ENCODE measurements at regions of chr16 and their contacts with region 1.

Region 1: GRCh38 chr16:2160915-2161551 is 5.5 kb downstream of the TRAF7 start:
- DNase-seq: no peak
- H3K4me3 ChIP-seq: no peak overlapping the region
- CTCF ChIP-seq: no peak

Region 2: DNA sequence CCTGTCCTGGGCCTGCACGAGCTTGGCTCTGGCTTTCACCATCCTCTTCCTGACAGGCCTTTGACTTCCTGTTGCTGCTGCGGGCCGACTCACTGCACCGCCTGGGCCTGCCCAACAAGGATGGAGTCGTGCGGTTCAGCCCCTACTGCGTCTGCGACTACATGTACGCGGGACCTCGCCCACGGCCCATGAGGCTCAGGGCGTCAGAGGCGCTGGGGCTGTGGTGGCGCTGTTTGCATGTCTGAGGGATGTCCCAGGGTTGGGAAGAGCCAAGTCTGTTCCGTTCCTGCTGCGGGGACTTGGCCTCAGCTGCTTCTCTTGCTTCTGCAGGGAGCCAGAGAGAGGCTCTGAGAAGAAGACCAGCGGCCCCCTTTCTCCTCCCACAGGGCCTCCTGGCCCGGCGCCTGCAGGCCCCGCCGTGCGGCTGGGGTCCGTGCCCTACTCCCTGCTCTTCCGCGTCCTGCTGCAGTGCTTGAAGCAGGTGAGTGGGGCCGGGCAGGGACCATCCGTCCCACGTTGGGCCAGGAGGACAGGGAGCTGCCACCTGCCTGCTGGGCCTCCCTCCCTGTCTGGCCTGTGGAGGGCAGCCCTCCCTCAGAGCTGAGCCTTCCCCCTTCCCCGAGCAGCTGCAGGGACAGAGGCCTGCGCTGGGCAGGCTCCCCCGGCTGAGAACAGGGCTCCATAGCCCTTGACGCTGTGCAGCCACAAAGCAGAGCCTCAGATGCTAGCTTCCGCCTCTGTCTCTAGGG is 89.4 kb before region 1 on chr16:
- in situ Hi-C with region 1: loop called (anchors 10 kb)
- DNase-seq: no peak
- H3K4me3 ChIP-seq: no peak overlapping the region
- CTCF ChIP-seq: no peak

Region 3: GRCh38 chr16:2236337-2237101 is 75.5 kb after region 1 on chr16 and contains the start of gene DNASE1L2:
- in situ Hi-C with region 1: no loop called
- DNase-seq: no peak
- H3K4me3 ChIP-seq: peak within 1 kb of the TSS; percentile 28
- CTCF ChIP-seq: no peak

Region 4: DNA sequence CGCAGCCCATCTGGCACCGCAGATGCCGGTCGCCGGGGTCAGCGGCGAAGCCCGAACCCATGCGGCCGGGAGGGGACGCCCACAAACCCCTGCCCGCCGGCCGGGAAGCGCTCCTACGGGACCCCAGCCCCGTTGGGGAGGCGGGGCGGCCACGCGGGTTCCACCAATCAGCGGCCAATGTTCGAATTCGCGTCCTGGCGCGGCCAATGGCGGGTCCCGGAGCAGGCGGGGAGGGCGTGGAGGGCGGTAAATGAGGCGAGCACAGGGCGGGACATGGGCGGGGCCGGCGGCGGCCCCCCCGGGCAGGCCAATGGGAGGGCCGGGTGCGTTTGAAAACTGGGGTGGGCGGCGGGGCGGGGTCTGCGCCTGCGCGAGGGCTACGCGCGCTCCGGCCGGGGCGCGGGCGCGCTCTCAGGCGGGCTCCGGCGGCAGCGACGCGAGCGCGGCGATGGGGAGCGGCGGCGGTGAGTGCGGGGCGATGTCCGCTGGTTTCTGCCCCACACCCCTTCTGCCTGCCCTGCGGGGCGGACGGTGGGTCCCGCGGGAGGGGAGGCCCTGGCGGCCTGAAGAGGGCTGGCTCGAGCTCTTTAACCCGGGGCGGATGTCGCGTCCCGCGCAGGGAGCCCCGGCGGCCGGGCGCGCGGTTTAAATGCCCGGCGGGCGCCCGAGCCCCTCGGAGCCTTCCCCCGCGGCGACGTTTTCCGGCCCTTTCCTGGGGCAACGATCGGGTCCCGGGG is 268.2 kb after region 1 on chr16 and contains the start of gene CCNF:
- in situ Hi-C with region 1: loop called (anchors 10 kb)
- DNase-seq: peak; percentile 85
- H3K4me3 ChIP-seq: peak within 1 kb of the TSS; percentile 79
- CTCF ChIP-seq: no peak

Measured in astrocyte of the cerebellum (primary cell).